ENCODE measurements at regions of chr6 and their contacts with region 1.

Region 1: GRCh38 chr6:32244946-32245398 is 21.1 kb upstream of the NOTCH4 start:
- DNase-seq: peak; percentile 84 to 88 (median 87)
- ATAC-seq: peak; percentile 66 to 95 (median 90)
- H3K4me3 ChIP-seq: peak overlapping the region in 7 of 12 donors; percentile 9 to 30 (median 23)
- H3K27ac ChIP-seq: peak overlapping the region; percentile 34 to 82 (median 66)
- H3K4me1 ChIP-seq: peaks cover 0 to 17% (median 12%) of the 10 kb centered on the region in 12 donors
- H3K27me3 ChIP-seq: no peaks in the 10 kb centered on the region
- CTCF ChIP-seq: peak; percentile 87 to 98 (median 92)
- POLR2A ChIP-seq: no peak

Region 2: GRCh38 chr6:32195652-32195901 is 49.4 kb before region 1 on chr6:
- intact Hi-C with region 1: loop called in 1 of 10 experiments (anchors 5 kb)
- DNase-seq: peak; percentile 100
- ATAC-seq: peak in 3 of 4 donors; percentile 85 to 93 (median 86)
- H3K4me3 ChIP-seq: peak overlapping the region in 10 of 12 donors; percentile 65 to 93 (median 76)
- H3K27ac ChIP-seq: peak overlapping the region; percentile 92 to 100 (median 100)
- H3K4me1 ChIP-seq: peaks cover 7 to 61% (median 39%) of the 10 kb centered on the region in 12 donors
- H3K27me3 ChIP-seq: no peaks in the 10 kb centered on the region
- CTCF ChIP-seq: peak; percentile 48 to 73 (median 56)
- POLR2A ChIP-seq: no peak

Region 3: GRCh38 chr6:32393665-32394420 is 148.9 kb after region 1 on chr6:
- intact Hi-C with region 1: loop called in 3 of 10 experiments (anchors 5 to 10 kb)
- DNase-seq: peak in 3 of 5 donors; percentile 30 to 58 (median 31)
- ATAC-seq: peak; percentile 81 to 99 (median 89)
- H3K4me3 ChIP-seq: no peak overlapping the region
- H3K27ac ChIP-seq: peak overlapping the region in 11 of 12 donors; percentile 4 to 83 (median 53)
- H3K4me1 ChIP-seq: peaks cover 0 to 15% (median 0%) of the 10 kb centered on the region in 12 donors
- H3K27me3 ChIP-seq: peaks cover 0 to 14% (median 0%) of the 10 kb centered on the region in 9 donors
- CTCF ChIP-seq: peak in 2 of 12 donors; percentile 16 to 42
- POLR2A ChIP-seq: peak in 1 of 2 donors; percentile 14

Region 4: DNA sequence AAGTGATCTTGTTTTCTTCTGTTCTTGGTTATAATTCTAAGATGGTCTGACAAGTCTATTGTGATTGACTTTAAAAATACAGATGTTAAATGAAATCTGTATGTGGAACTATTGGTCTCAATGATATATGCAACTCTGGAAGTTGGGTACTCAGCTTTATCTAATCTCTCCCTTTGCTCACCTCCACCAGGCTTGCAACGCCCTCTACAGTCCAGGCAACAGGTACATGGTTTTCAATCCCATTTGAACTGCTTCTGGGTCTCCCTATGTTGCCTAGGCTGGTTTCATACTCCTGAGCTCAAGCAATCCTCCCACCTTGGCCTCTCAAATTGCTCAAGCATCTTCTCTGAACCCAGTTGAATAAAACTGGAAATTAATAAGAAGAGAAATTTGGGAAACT is 447.0 kb after region 1 on chr6:
- intact Hi-C with region 1: loop called in 1 of 10 experiments (anchors 10 kb)
- DNase-seq: peak in 2 of 5 donors; percentile 28 to 32
- ATAC-seq: no peak
- H3K4me3 ChIP-seq: no peak overlapping the region
- H3K27ac ChIP-seq: no peak overlapping the region
- H3K4me1 ChIP-seq: peaks cover 0 to 5% (median 0%) of the 10 kb centered on the region in 12 donors
- H3K27me3 ChIP-seq: peaks cover 0 to 11% (median 0%) of the 10 kb centered on the region in 9 donors
- CTCF ChIP-seq: peak in 8 of 12 donors; percentile 15 to 53 (median 34)
- POLR2A ChIP-seq: no peak

Region 5: GRCh38 chr6:32796848-32797776 is 552.1 kb after region 1 on chr6:
- intact Hi-C with region 1: loop called in 8 of 10 experiments (anchors 5 to 10 kb)
- DNase-seq: peak; percentile 51 to 83 (median 65)
- ATAC-seq: peak; percentile 67 to 80 (median 74)
- H3K4me3 ChIP-seq: peak overlapping the region in 8 of 12 donors; percentile 6 to 43 (median 20)
- H3K27ac ChIP-seq: peak overlapping the region in 2 of 12 donors; percentile 6 to 59
- H3K4me1 ChIP-seq: peaks cover 0 to 45% (median 2%) of the 10 kb centered on the region in 12 donors
- H3K27me3 ChIP-seq: peaks cover 0 to 80% (median 19%) of the 10 kb centered on the region in 9 donors
- CTCF ChIP-seq: peak; percentile 86 to 92 (median 88)
- POLR2A ChIP-seq: no peak